Calu3 (cell line): ENCODE measurements at regions of chr6 and their contacts with region 1.

Region 1: GRCh38 chr6:143146186-143146851 is 85.6 kb downstream of the AIG1 start:
- DNase-seq: no peak
- H3K4me3 Mint-ChIP-seq: no peak overlapping the region
- H3K27ac Mint-ChIP-seq: peak overlapping the region; percentile 6
- H3K4me1 Mint-ChIP-seq: no peaks in the 10 kb centered on the region
- H3K27me3 Mint-ChIP-seq: no peaks in the 10 kb centered on the region
- CTCF ChIP-seq: no peak

Region 2: DNA sequence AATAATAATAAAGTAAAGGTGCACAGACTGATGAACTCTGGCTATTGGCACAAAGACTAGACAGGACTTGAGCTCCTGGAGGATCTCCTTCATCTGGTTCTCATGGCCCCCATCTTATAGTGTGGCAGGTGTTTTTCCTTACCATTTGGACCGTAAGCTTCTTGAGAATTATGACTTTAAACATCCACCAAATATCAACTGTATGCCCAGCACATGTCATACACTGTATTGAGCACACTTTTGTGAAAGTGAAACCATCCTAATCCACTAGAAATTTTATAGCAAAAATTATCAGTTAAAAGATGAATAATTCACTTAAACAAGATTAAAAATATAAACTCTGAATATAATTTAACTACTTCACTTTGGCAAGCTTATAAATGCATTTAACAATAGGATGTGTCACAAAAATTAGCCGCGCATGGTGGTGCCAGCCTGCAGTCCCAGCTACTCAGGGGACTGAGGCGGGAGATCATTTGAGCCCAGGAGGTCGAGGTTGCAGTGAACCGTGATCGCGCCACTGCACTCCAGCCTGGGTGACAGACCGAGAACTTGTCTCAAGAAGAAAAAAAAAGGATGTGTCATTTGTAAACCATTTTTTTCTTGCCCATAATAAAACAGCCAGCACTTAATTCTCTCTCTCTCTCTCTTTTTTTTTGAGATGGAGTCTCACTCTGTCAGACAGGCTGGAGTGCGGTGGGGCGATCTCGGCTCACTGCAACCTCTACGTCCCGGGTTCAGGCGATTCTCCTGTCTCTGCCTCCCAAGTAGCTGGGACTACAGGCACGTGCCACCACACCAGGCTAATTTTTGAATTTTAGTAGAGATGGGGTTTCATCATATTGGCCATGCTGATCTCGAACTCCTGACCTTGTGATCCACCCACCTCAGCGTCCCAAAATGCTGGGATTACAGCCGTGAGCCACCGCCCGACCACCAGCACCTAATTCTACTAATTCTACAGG is 210.5 kb before region 1 on chr6:
- CTCF ChIA-PET with region 1: no interaction called
- intact Hi-C with region 1: no loop called
- DNase-seq: no peak
- H3K4me3 Mint-ChIP-seq: no peak overlapping the region
- H3K27ac Mint-ChIP-seq: no peak overlapping the region
- H3K4me1 Mint-ChIP-seq: peaks cover 20% of the 10 kb centered on the region
- H3K27me3 Mint-ChIP-seq: no peaks in the 10 kb centered on the region
- CTCF ChIP-seq: no peak

Region 3: GRCh38 chr6:143135797-143136561 is 10.3 kb before region 1 on chr6:
- CTCF ChIA-PET with region 1: no interaction called
- intact Hi-C with region 1: no loop called
- DNase-seq: no peak
- H3K4me3 Mint-ChIP-seq: no peak overlapping the region
- H3K27ac Mint-ChIP-seq: no peak overlapping the region
- H3K4me1 Mint-ChIP-seq: no peaks in the 10 kb centered on the region
- H3K27me3 Mint-ChIP-seq: no peaks in the 10 kb centered on the region
- CTCF ChIP-seq: no peak

Region 4: DNA sequence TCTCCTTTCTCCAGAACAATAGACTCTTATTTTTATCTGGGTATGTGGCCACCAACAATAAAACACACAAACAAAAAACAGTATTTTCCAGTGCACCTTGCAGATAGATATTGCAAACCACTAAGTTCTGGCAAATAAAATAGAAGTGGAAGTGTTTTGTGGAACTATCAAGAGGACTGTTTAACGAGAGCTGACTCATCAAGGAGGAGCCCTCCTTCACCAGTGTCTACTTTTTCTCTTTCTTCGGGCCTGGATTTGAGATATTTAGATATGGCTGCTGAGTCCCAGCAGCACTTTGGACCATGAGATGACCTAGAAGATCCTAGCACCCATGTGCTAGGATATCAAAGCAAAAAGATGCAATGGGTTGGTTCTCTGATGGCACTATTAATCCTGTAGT is 69.0 kb after region 1 on chr6:
- CTCF ChIA-PET with region 1: no interaction called
- intact Hi-C with region 1: loop called (anchors 2 kb)
- DNase-seq: no peak
- H3K4me3 Mint-ChIP-seq: no peak overlapping the region
- H3K27ac Mint-ChIP-seq: no peak overlapping the region
- H3K4me1 Mint-ChIP-seq: no peaks in the 10 kb centered on the region
- H3K27me3 Mint-ChIP-seq: no peaks in the 10 kb centered on the region
- CTCF ChIP-seq: no peak

Region 5: GRCh38 chr6:143325379-143326140 is 179.2 kb after region 1 on chr6:
- CTCF ChIA-PET with region 1: no interaction called
- intact Hi-C with region 1: no loop called
- DNase-seq: no peak
- H3K4me3 Mint-ChIP-seq: no peak overlapping the region
- H3K27ac Mint-ChIP-seq: no peak overlapping the region
- H3K4me1 Mint-ChIP-seq: no peaks in the 10 kb centered on the region
- H3K27me3 Mint-ChIP-seq: no peaks in the 10 kb centered on the region
- CTCF ChIP-seq: no peak